ENCODE measurements at regions of chr16 and their contacts with region 1.

Region 1: DNA sequence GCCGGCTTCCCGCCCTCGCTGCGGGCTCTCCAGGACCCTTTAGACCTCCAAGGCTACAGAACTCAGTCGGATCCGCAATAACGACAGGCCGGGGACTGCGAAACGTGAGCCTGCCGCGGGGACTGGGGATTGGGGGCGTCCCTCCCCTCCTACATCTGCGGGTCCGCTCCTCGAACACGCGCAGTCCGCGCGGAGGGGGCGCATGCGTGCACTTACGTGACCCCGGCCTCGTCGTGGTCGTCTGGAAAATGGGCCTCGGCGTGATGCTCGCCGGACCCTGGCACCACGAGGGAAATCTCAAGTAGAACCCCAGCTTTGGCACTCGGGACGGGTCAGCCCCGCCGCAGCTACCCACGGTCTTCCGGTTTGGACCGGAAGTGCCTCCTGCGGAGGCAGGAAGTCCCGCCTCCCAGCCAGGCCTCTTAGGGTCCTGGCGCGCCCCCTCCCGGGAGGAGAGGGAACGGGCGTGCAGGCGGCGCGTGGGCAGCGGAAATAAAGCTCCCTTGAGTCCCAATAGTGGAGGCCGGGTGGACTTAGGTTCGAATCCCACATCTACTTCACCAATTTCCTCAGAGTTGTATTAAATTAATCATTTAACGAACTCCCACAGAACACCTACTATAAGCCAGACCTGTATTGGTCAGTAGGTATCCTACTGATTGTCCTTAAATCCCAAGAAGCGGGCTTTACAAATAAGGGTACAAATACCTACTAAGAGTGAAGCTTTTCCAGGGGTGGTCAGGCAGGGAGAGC is at the start of gene TAF1C:
- DNase-seq: peak; percentile 95
- H3K4me3 Mint-ChIP-seq: peak within 1 kb of the TSS; percentile 99
- H3K27ac Mint-ChIP-seq: peak within 1 kb of the TSS; percentile 95
- H3K4me1 Mint-ChIP-seq: peaks cover 9% of the 10 kb centered on the region
- H3K27me3 Mint-ChIP-seq: no peaks in the 10 kb centered on the region
- CTCF ChIP-seq: peak; percentile 94
- total RNA-seq, gene TAF1C: 77.4 and 78.5 TPM in 2 replicates

Region 2: GRCh38 chr16:84084570-84085270 is 102.1 kb before region 1 on chr16:
- CTCF ChIA-PET with region 1: interaction called, 13 read pairs
- intact Hi-C with region 1: no loop called
- DNase-seq: peak; percentile 80
- H3K4me3 Mint-ChIP-seq: no peak overlapping the region
- H3K27ac Mint-ChIP-seq: no peak overlapping the region
- H3K4me1 Mint-ChIP-seq: no peaks in the 10 kb centered on the region
- H3K27me3 Mint-ChIP-seq: no peaks in the 10 kb centered on the region
- CTCF ChIP-seq: peak; percentile 84

Region 3: DNA sequence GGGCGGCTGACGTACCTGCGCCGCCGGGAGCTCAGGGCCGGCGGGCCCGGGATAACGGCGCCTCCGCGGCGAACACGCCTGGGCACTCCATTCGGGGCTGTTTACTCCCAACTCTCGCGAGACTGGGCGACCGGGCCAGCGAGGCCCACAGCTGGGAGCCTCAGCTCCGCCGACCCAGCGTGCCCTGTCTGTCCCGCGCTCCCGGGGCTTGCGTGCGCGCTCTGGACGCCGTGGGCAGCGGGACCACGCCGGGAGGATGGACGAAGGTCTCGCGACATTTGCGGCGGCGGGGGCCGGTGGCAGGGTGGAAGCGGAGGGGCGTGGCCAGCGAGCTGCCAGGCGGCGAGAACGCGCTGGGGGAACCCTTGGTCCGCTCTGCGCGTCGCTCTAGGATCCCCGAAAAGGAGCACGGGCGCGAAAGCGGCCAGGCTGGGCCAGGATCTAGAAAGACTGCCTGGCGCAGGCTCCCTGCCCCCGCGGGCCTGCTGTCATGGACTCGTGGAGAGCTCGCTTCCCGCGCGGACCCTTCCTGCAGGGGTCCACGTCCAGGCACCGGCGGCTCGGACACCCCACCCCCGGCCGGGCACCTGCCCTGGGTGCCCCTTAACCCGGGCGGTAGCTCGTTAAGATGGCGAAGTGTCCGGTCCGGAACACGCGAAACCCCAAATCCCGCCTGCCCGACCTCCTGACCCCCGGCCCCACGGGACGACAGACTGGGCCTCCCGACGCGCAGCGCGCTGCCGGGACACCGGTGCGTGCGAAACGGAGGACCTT is 70.0 kb before region 1 on chr16 and contains the start of gene MBTPS1:
- CTCF ChIA-PET with region 1: interaction called, 15 read pairs
- intact Hi-C with region 1: no loop called
- DNase-seq: peak; percentile 100
- H3K4me3 Mint-ChIP-seq: peak within 1 kb of the TSS; percentile 82
- H3K27ac Mint-ChIP-seq: peak within 1 kb of the TSS; percentile 88
- H3K4me1 Mint-ChIP-seq: peaks cover 8% of the 10 kb centered on the region
- H3K27me3 Mint-ChIP-seq: no peaks in the 10 kb centered on the region
- CTCF ChIP-seq: no peak
- total RNA-seq, gene MBTPS1: 116 and 130 TPM in 2 replicates

Region 4: GRCh38 chr16:84156342-84156784 is 30.5 kb before region 1 on chr16:
- CTCF ChIA-PET with region 1: interaction called, 18 read pairs
- intact Hi-C with region 1: no loop called
- DNase-seq: peak; percentile 39
- H3K4me3 Mint-ChIP-seq: no peak overlapping the region
- H3K27ac Mint-ChIP-seq: peak overlapping the region; percentile 10
- H3K4me1 Mint-ChIP-seq: no peaks in the 10 kb centered on the region
- H3K27me3 Mint-ChIP-seq: peaks cover 33% of the 10 kb centered on the region
- CTCF ChIP-seq: no peak

Region 5: DNA sequence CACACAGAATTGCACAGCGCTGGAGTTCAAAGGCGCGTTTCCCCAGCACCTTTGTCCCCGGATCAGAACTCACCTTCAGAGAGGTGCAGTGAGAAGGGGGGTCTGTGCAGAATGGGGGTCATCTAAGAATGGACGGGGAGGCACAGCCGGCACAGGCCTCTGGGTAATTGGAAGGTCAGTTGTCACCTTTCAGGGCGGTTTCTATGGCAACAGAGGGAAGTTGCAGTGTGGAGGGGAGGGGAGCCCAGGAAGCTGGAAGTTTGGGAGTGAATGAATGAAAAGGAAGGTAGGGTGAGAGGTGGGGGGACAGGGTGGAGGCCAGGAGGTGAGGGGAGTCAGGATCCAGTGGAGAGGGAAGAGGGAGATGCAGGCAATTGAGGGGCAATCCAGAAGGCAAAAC is 65.3 kb after region 1 on chr16:
- CTCF ChIA-PET with region 1: no interaction called
- intact Hi-C with region 1: no loop called
- DNase-seq: no peak
- H3K4me3 Mint-ChIP-seq: no peak overlapping the region
- H3K27ac Mint-ChIP-seq: no peak overlapping the region
- H3K4me1 Mint-ChIP-seq: no peaks in the 10 kb centered on the region
- H3K27me3 Mint-ChIP-seq: peaks cover 96% of the 10 kb centered on the region
- CTCF ChIP-seq: no peak

Measured in Calu3 (cell line).